Heart left ventricle (tissue), 16 donors: ENCODE measurements at regions of chr14 and their contacts with region 1.

Region 1: GRCh38 chr14:69715725-69716477 is 51.0 kb upstream of the SRSF5 start:
- DNase-seq: peak in 4 of 5 donors; percentile 77 to 86 (median 80)
- ATAC-seq: peak; percentile 33 to 70 (median 61)
- H3K4me3 ChIP-seq: no peak overlapping the region
- H3K27ac ChIP-seq: peak overlapping the region in 9 of 12 donors; percentile 4 to 89 (median 52)
- H3K4me1 ChIP-seq: peaks cover 22 to 99% (median 67%) of the 10 kb centered on the region in 12 donors
- H3K27me3 ChIP-seq: no peaks in the 10 kb centered on the region
- CTCF ChIP-seq: no peak
- POLR2A ChIP-seq: no peak

Region 2: DNA sequence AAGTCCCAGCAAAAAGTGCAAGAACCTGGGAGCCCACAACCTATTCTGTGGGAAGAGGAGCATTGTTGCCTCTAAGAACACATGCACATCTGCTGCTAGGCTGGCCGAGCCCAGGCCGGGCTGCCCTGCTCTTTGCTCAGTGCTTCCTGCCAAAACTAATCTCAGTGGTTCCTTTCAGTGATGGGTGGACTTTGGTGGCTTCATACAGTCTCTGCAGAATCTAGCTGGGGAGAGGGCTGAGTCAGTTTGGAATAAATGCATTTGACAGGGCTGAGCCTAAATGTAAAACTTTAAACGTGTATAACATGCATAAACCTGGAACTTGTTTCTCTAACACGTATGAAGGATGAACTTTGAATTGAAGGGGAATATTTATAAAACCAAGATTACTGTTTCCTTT is 185.8 kb before region 1 on chr14:
- intact Hi-C with region 1: no loop called
- DNase-seq: no peak
- ATAC-seq: no peak
- H3K4me3 ChIP-seq: no peak overlapping the region
- H3K27ac ChIP-seq: no peak overlapping the region
- H3K4me1 ChIP-seq: peaks cover 0 to 1% (median 0%) of the 10 kb centered on the region in 12 donors
- H3K27me3 ChIP-seq: peaks cover 0 to 16% (median 0%) of the 10 kb centered on the region in 9 donors
- CTCF ChIP-seq: no peak
- POLR2A ChIP-seq: no peak

Region 3: GRCh38 chr14:69667938-69668335 is 48.0 kb before region 1 on chr14:
- intact Hi-C with region 1: loop called in 4 of 10 experiments (anchors 5 to 10 kb)
- DNase-seq: no peak
- ATAC-seq: no peak
- H3K4me3 ChIP-seq: no peak overlapping the region
- H3K27ac ChIP-seq: peak overlapping the region in 3 of 12 donors; percentile 11 to 66 (median 55)
- H3K4me1 ChIP-seq: peaks cover 48 to 100% (median 83%) of the 10 kb centered on the region in 12 donors
- H3K27me3 ChIP-seq: no peaks in the 10 kb centered on the region
- CTCF ChIP-seq: no peak
- POLR2A ChIP-seq: no peak

Region 4: GRCh38 chr14:69673578-69674305 is 42.2 kb before region 1 on chr14:
- intact Hi-C with region 1: loop called in 4 of 10 experiments (anchors 5 to 10 kb)
- DNase-seq: peak in 1 of 5 donors; percentile 31
- ATAC-seq: peak in 2 of 4 donors; percentile 21 to 32
- H3K4me3 ChIP-seq: peak overlapping the region in 5 of 12 donors; percentile 1 to 34 (median 19)
- H3K27ac ChIP-seq: peak overlapping the region; percentile 1 to 79 (median 56)
- H3K4me1 ChIP-seq: peaks cover 33 to 85% (median 72%) of the 10 kb centered on the region in 12 donors
- H3K27me3 ChIP-seq: no peaks in the 10 kb centered on the region
- CTCF ChIP-seq: no peak
- POLR2A ChIP-seq: no peak

Region 5: GRCh38 chr14:69682621-69683263 is 33.2 kb before region 1 on chr14:
- intact Hi-C with region 1: loop called in 1 of 10 experiments (anchors 5 kb)
- DNase-seq: no peak
- ATAC-seq: peak in 1 of 4 donors; percentile 23
- H3K4me3 ChIP-seq: no peak overlapping the region
- H3K27ac ChIP-seq: peak overlapping the region in 5 of 12 donors; percentile 7 to 70 (median 40)
- H3K4me1 ChIP-seq: peaks cover 6 to 84% (median 59%) of the 10 kb centered on the region in 12 donors
- H3K27me3 ChIP-seq: no peaks in the 10 kb centered on the region
- CTCF ChIP-seq: no peak
- POLR2A ChIP-seq: no peak